HepG2 (cell line): ENCODE measurements at regions of chr19 and their contacts with region 1.

Region 1: GRCh38 chr19:572140-572742 is at the start of gene BSG:
- DNase-seq: peak; percentile 94
- ATAC-seq: peak; percentile 53
- H3K4me3 ChIP-seq: peak within 1 kb of the TSS; percentile 90 to 99 (median 96)
- H3K27ac ChIP-seq: peak within 1 kb of the TSS; percentile 95
- H3K4me1 ChIP-seq: peaks cover 30% of the 10 kb centered on the region
- H3K27me3 ChIP-seq: no peaks in the 10 kb centered on the region; a peak in 1 of 5 replicates
- CTCF ChIP-seq: no peak
- EP300 ChIP-seq: 0 out of 4 replicates have a peak, but pooled peaks of 1 of the 2 experiments have one; percentile 23
- POLR2A ChIP-seq: peak; percentile 96 to 97
- RAD21 ChIP-seq: peak; percentile 70
- total RNA-seq, gene BSG: 136 and 309 TPM in 2 replicates

Region 2: DNA sequence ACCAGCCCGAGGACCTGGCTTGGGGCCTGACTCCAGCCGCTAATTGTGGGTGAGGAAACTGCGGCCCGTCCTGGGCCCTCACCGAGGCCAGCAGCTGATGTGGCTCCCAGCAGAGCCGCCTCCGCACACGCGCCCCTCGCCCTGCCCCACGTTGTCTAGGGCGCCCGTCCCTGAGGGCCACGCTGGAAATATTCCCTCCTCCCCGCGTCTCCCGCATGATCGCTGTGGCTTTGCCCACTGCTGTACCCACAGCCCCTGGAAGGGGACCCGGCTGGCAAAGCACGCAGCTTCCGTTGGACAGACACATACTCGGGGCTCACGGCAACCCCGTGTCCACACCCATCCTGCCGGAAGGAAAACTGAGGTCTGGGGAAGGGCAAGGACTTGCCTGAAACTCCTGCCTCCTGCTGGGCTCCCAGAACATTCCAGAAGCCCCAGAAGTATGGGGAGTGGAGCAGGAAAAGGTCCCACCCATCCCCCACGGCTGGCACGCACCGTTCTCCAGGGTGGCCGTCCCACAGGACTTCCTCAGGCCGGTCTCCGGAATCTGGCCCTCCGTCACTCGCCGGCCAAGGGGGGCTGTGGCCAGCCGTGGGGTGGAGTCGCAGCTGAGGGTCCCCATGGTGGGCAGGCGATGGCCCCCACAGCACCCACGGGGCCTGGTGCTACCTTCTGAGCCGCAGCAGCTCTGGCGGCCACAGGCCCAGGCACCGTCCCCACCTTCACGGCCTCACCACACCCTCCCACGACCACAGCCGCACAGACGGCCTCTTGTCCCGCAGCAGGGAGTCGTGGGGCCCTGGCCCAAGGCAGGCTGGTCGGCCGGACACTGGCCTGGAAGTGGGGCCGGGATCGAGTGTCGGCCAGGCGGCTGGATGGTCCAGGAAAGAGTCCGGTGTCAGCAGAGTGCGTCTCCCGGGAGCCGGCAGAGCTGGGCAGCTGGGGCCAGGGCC is 97.8 kb before region 1 on chr19:
- CTCF ChIA-PET with region 1: no interaction called
- POLR2A ChIA-PET with region 1: no interaction called
- in situ Hi-C with region 1: no loop called
- intact Hi-C with region 1: no loop called
- DNase-seq: no peak
- ATAC-seq: peak; percentile 68
- H3K4me3 ChIP-seq: no peak overlapping the region
- H3K27ac ChIP-seq: no peak overlapping the region
- H3K4me1 ChIP-seq: no peaks in the 10 kb centered on the region
- H3K27me3 ChIP-seq: peaks cover 5 to 31% of the 10 kb centered on the region in 2 experiments; a peak in 4 of 5 replicates
- CTCF ChIP-seq: no peak
- EP300 ChIP-seq: no peak
- POLR2A ChIP-seq: no peak
- RAD21 ChIP-seq: no peak

Region 3: GRCh38 chr19:531009-531752 is 41.1 kb before region 1 on chr19:
- CTCF ChIA-PET with region 1: no interaction called
- POLR2A ChIA-PET with region 1: interaction called, 16 read pairs
- in situ Hi-C with region 1: no loop called
- intact Hi-C with region 1: no loop called
- DNase-seq: peak; percentile 80
- ATAC-seq: peak; percentile 68
- H3K4me3 ChIP-seq: peak overlapping the region; percentile 63 to 98 (median 97)
- H3K27ac ChIP-seq: peak overlapping the region; percentile 94
- H3K4me1 ChIP-seq: peaks cover 56% of the 10 kb centered on the region
- H3K27me3 ChIP-seq: no peaks in the 10 kb centered on the region
- CTCF ChIP-seq: peak; percentile 34
- EP300 ChIP-seq: no peak
- POLR2A ChIP-seq: peak; percentile 39 to 78
- RAD21 ChIP-seq: no peak; the same call in none of the 2 replicates